ENCODE measurements at regions of chr11 and their contacts with region 1.

Region 1: DNA sequence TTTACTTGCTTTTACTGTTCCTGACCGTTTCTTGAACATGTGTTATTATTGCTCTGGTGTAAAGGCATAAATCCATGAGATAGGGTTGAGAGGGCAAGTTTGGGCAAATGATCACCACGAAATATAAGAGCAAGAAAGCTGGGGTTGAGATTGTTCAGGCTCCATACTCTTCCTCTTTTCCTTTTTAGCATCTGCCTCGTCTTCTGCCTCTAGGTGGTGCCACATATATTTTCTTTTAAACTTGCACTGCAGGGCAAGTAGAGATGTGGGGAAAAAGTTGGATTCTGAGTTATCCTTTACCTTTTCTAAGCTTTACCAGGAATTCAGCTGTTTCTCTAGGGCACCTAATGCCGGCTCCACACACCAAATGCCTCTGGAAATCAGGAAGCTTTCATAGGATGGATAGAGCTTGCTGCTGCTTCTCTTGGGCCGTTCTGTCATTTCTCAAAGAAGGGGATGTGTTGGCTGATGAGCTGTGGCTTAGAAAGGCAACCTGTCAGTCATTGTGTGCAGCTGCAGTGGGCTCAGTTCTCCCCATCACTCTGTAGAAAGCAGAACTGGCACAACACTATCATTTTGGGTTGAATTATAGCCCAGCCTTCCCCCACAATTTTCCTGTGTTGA is 98.2 kb downstream of the LDLRAD3 start:
- DNase-seq: no peak
- H3K4me3 ChIP-seq: no peak overlapping the region
- H3K27ac ChIP-seq: no peak overlapping the region
- H3K4me1 ChIP-seq: peaks cover 0 to 9% (median 4%) of the 10 kb centered on the region in 4 experiments; a peak in 3 of 7 replicates
- H3K27me3 ChIP-seq: no peaks in the 10 kb centered on the region
- CTCF ChIP-seq: peak in 2 of 3 experiments; percentile 48 to 52; a peak in 2 of 4 replicates
- EP300 ChIP-seq: no peak
- POLR2A ChIP-seq: no peak
- RAD21 ChIP-seq: peak; percentile 50 to 59

Region 2: GRCh38 chr11:35321532-35322359 is 720.4 kb before region 1 on chr11:
- CTCF ChIA-PET with region 1: no interaction called
- POLR2A ChIA-PET with region 1: no interaction called
- DNase-seq: no peak
- H3K4me3 ChIP-seq: no peak overlapping the region
- H3K27ac ChIP-seq: no peak overlapping the region
- H3K4me1 ChIP-seq: peaks cover 0 to 5% (median 0%) of the 10 kb centered on the region in 4 experiments; a peak in 1 of 7 replicates
- H3K27me3 ChIP-seq: no peaks in the 10 kb centered on the region; a peak in 1 of 7 replicates
- CTCF ChIP-seq: no peak
- EP300 ChIP-seq: no peak
- POLR2A ChIP-seq: no peak
- RAD21 ChIP-seq: no peak

Region 3: DNA sequence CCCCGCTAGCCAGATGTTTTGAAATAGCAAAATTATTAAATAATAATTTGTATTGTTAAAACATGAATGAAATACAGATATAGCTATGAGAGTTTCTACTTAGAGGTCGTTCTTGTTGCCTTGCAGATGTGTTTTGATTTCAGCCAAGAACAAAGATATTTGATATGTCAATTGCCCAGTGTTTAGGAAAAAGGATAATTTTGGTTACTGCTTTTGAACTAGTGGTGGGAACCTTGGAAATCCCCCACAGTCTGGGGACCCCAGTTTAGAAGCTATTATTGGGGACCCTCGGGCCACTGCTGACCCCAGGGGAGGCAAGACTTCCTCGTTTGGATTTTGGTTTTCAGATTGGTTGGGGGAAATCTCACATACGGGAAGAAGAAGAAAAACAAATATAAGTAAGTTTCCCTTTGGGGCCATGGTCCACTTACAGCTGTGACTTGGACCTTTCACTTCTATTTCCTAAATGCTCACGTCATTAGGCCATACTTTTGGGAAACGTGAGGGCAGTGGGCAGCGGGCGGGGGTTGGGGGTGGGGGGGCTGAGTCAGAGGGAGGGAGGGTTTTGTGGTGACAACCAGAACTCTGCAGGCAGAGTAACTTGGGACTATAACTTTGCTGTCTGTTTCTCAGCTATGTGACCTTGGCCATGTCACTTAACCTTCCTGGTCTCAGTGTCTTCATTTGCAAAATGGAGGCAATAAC is 61.3 kb before region 1 on chr11:
- CTCF ChIA-PET with region 1: no interaction called
- POLR2A ChIA-PET with region 1: no interaction called
- DNase-seq: no peak
- H3K4me3 ChIP-seq: no peak overlapping the region
- H3K27ac ChIP-seq: no peak overlapping the region
- H3K4me1 ChIP-seq: peaks cover 8 to 26% (median 13%) of the 10 kb centered on the region in 4 experiments
- H3K27me3 ChIP-seq: no peaks in the 10 kb centered on the region
- CTCF ChIP-seq: no peak
- EP300 ChIP-seq: no peak
- POLR2A ChIP-seq: no peak
- RAD21 ChIP-seq: no peak

Region 4: GRCh38 chr11:36023922-36024321 is 18.2 kb before region 1 on chr11:
- CTCF ChIA-PET with region 1: interaction called, 17 read pairs
- POLR2A ChIA-PET with region 1: no interaction called
- DNase-seq: no peak
- H3K4me3 ChIP-seq: no peak overlapping the region
- H3K27ac ChIP-seq: no peak overlapping the region
- H3K4me1 ChIP-seq: peaks cover 3 to 13% (median 9%) of the 10 kb centered on the region in 4 experiments
- H3K27me3 ChIP-seq: no peaks in the 10 kb centered on the region
- CTCF ChIP-seq: no peak
- EP300 ChIP-seq: no peak
- POLR2A ChIP-seq: no peak
- RAD21 ChIP-seq: no peak

Region 5: DNA sequence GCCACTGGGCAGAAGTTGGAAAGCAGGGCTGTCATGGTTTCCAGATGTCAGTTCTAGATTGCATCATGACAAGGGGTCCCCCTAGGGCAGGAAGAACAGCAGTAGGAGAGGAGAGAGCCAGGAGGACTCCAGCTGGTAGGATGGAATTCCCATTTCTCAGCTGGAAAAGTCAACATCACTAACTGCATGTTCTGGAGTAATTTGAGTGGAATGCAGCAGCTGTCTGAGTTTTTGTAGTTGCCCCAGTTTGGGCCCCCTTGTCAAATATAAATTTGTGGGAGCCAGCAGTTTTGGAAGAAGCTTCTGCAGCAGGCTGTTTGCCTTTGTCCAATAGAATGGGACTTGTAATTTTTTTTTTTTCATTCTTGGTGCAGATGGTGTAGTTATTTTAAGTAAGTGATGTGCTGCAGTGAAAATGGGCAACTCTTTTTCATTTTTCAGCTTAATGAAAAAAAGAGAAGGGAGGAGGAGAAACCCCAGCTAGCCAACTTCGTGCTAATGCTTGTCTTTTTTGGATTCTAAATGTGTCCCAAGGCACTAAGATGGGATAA is 11.3 kb before region 1 on chr11:
- CTCF ChIA-PET with region 1: interaction called, 12 read pairs
- POLR2A ChIA-PET with region 1: interaction called, 3 read pairs
- DNase-seq: no peak
- H3K4me3 ChIP-seq: no peak overlapping the region
- H3K27ac ChIP-seq: no peak overlapping the region
- H3K4me1 ChIP-seq: peaks cover 5 to 10% (median 8%) of the 10 kb centered on the region in 4 experiments
- H3K27me3 ChIP-seq: no peaks in the 10 kb centered on the region
- CTCF ChIP-seq: no peak
- EP300 ChIP-seq: no peak
- POLR2A ChIP-seq: no peak
- RAD21 ChIP-seq: no peak

Region 6: DNA sequence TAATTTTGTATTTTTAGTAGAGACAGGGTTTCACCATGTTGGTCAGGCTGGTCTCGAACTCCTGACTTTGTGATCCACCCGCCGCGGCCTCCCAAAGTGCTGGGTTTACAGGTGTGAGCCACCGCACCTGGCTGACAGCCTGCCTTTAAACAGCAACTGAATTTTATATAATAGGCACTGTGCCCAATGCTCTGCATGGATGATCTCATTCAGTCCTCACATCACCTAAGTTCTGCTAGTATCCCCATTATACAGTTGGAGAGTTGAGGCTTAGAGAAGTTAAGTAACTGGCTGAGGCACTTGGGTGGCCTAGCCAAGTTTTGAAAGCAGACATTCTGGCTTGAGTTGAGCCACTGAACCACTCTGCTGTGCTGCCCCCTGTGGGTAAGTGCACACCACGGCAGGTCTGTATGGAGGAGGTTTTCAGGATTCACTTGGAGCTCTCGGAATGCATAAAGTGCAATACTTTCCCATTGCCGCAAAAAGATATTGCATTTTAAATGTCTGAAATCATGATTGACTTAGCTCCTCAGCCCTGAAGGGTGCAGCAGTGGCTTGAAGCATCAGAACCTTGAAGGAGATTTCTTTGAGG is 14.2 kb after region 1 on chr11:
- CTCF ChIA-PET with region 1: interaction called, 54 read pairs
- POLR2A ChIA-PET with region 1: interaction called, 6 read pairs
- DNase-seq: peak in 1 of 2 experiments; percentile 74
- H3K4me3 ChIP-seq: no peak overlapping the region
- H3K27ac ChIP-seq: no peak overlapping the region
- H3K4me1 ChIP-seq: peaks cover 0 to 14% (median 4%) of the 10 kb centered on the region in 4 experiments; a peak in 3 of 7 replicates
- H3K27me3 ChIP-seq: no peaks in the 10 kb centered on the region
- CTCF ChIP-seq: peak; percentile 85 to 94 (median 88)
- EP300 ChIP-seq: no peak
- POLR2A ChIP-seq: no peak
- RAD21 ChIP-seq: peak; percentile 85 to 89

Measured in H1 (cell line).